CD8-positive, alpha-beta T cell (primary cell): ENCODE measurements at regions of chr5 and their contacts with region 1.

Region 1: GRCh38 chr5:80134879-80135278 is 99.7 kb downstream of the THBS4 start:
- DNase-seq: no peak
- ATAC-seq: no peak
- H3K4me3 ChIP-seq: peak overlapping the region in 1 of 2 experiments; percentile 17
- H3K4me3 Mint-ChIP-seq: peak overlapping the region; percentile 13
- H3K27ac ChIP-seq: peak overlapping the region; percentile 60 to 63
- H3K27ac Mint-ChIP-seq: peak overlapping the region; percentile 93
- H3K4me1 ChIP-seq: peaks cover 83% of the 10 kb centered on the region
- H3K4me1 Mint-ChIP-seq: peaks cover 87% of the 10 kb centered on the region
- H3K27me3 ChIP-seq: no peaks in the 10 kb centered on the region
- H3K27me3 Mint-ChIP-seq: no peaks in the 10 kb centered on the region
- CTCF ChIP-seq: no peak

Region 2: DNA sequence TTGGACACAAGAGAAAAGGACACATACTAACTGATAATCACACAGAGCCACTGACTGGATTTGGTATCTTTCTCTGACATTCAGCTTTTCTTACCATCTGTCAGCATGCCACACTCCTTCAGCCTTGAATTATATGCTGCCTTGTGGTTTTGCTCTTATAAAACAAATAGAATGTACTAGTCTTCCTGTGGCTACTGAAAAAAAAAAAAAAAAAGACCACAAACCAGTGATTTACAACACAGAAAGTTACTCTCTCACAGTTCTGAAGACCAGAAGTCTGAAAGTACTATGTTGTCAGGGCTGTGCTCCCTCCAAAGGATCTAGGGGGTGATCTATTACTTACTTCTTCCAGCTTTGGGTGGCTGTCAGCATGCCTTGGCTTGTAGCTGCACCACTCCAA is 17.4 kb before region 1 on chr5:
- CTCF ChIA-PET with region 1: no interaction called
- POLR2A ChIA-PET with region 1: interaction called, 12 read pairs
- intact Hi-C with region 1: no loop called
- DNase-seq: peak in 1 of 9 experiments; percentile 26
- ATAC-seq: no peak
- H3K4me3 ChIP-seq: no peak overlapping the region
- H3K4me3 Mint-ChIP-seq: no peak overlapping the region
- H3K27ac ChIP-seq: no peak overlapping the region
- H3K27ac Mint-ChIP-seq: peak overlapping the region; percentile 89
- H3K4me1 ChIP-seq: peaks cover 36% of the 10 kb centered on the region
- H3K4me1 Mint-ChIP-seq: peaks cover 56% of the 10 kb centered on the region
- H3K27me3 ChIP-seq: no peaks in the 10 kb centered on the region
- H3K27me3 Mint-ChIP-seq: no peaks in the 10 kb centered on the region
- CTCF ChIP-seq: no peak

Region 3: DNA sequence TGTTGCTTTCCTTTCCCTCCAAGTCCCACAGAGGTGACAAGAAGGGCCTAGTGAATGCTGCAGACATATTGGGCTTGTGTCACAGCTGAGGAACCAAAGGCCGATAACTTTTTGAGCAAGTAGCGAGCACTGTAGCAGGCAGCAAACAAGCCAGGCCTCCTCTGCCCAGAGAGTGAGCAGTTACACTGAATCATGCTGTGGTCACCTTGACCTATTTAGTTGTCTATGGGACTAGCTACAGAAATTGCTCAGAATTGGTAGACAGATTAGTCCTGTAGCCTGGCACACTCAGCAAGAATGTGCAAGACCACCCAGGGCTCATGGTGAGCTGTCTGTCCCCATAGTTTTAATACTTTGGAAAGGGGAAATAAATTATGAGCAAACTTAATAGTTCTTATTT is 1191.7 kb after region 1 on chr5:
- CTCF ChIA-PET with region 1: no interaction called
- POLR2A ChIA-PET with region 1: no interaction called
- intact Hi-C with region 1: no loop called
- DNase-seq: no peak
- ATAC-seq: no peak
- H3K4me3 ChIP-seq: no peak overlapping the region
- H3K4me3 Mint-ChIP-seq: no peak overlapping the region
- H3K27ac ChIP-seq: no peak overlapping the region
- H3K27ac Mint-ChIP-seq: no peak overlapping the region
- H3K4me1 ChIP-seq: no peaks in the 10 kb centered on the region
- H3K4me1 Mint-ChIP-seq: no peaks in the 10 kb centered on the region
- H3K27me3 ChIP-seq: no peaks in the 10 kb centered on the region
- H3K27me3 Mint-ChIP-seq: no peaks in the 10 kb centered on the region
- CTCF ChIP-seq: no peak